ENCODE measurements at regions of chr1 and their contacts with region 1.

Region 1: GRCh38 chr1:235128456-235129328 is at the start of gene TOMM20:
- DNase-seq: peak; percentile 94
- H3K4me3 ChIP-seq: peak within 1 kb of the TSS; percentile 80 to 82
- H3K27ac ChIP-seq: peak within 1 kb of the TSS; percentile 79
- H3K4me1 ChIP-seq: no peaks in the 10 kb centered on the region
- H3K27me3 ChIP-seq: no peaks in the 10 kb centered on the region
- CTCF ChIP-seq: peak in 3 of 4 experiments; percentile 12 to 30 (median 21)
- POLR2A ChIP-seq: peak; percentile 49
- total RNA-seq, gene TOMM20: 77.1 to 135 TPM

Region 2: DNA sequence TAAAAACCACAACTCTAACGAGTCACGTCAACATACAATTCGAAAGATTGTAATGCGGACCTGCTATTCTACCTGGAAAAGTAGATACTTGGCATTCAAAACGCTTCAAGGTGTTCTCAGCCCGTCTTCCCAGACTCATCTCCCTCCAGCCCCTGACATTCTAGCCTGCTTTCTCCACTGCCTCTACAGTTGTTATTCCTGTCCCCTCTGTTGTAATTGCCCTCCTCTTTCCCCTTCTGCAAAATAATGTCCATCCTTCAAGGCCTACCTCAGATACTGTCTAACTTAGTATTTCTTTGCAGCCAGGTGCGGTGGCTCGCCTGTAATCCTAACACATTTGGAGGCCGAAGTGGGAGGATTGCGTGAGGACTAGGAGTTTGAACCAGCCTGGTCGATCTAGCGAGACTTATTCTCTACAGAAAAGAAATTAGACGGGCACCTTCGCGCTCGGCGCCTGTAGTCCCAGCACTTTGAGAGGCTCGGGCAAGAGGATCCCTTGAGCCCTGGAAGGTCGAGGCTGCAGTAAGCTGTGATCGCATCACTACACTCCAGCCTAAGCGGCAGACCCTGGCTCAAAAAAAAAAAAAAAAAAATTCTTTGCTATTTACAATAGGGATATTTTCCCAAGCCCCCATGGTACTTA is 33.1 kb after region 1 on chr1:
- intact Hi-C with region 1: loop called (anchors 2 kb)
- DNase-seq: no peak
- H3K4me3 ChIP-seq: peak overlapping the region; percentile 56 to 66
- H3K27ac ChIP-seq: peak overlapping the region; percentile 85 to 90
- H3K4me1 ChIP-seq: no peaks in the 10 kb centered on the region
- H3K27me3 ChIP-seq: no peaks in the 10 kb centered on the region
- CTCF ChIP-seq: no peak
- POLR2A ChIP-seq: no peak